ENCODE measurements at regions of chr12 and their contacts with region 1.

Region 1: GRCh38 chr12:122265931-122266771 is at the start of gene VPS33A:
- DNase-seq: peak; percentile 82 to 97 (median 92)
- ATAC-seq: peak; percentile 72
- H3K4me3 ChIP-seq: peak within 1 kb of the TSS; percentile 89 to 95
- H3K4me3 Mint-ChIP-seq: peak within 1 kb of the TSS; percentile 97
- H3K27ac ChIP-seq: peak within 1 kb of the TSS; percentile 95 to 96
- H3K27ac Mint-ChIP-seq: peak within 1 kb of the TSS; percentile 100
- H3K4me1 ChIP-seq: peaks cover 9% of the 10 kb centered on the region
- H3K4me1 Mint-ChIP-seq: peaks cover 36% of the 10 kb centered on the region
- H3K27me3 ChIP-seq: no peaks in the 10 kb centered on the region
- H3K27me3 Mint-ChIP-seq: no peaks in the 10 kb centered on the region
- CTCF ChIP-seq: no peak
- total RNA-seq, gene VPS33A: 11.6 to 13.1 TPM

Region 2: GRCh38 chr12:121399391-121400331 is 866.5 kb before region 1 on chr12 and contains the start of gene RNF34:
- CTCF ChIA-PET with region 1: no interaction called
- POLR2A ChIA-PET with region 1: no interaction called
- intact Hi-C with region 1: loop called in 1 of 2 experiments (anchors 5 kb)
- DNase-seq: peak; percentile 95 to 99 (median 97)
- ATAC-seq: peak; percentile 87
- H3K4me3 ChIP-seq: peak within 1 kb of the TSS; percentile 78 to 89
- H3K4me3 Mint-ChIP-seq: peak within 1 kb of the TSS; percentile 86
- H3K27ac ChIP-seq: peak within 1 kb of the TSS; percentile 78 to 90
- H3K27ac Mint-ChIP-seq: peak within 1 kb of the TSS; percentile 97
- H3K4me1 ChIP-seq: peaks cover 28% of the 10 kb centered on the region
- H3K4me1 Mint-ChIP-seq: peaks cover 33% of the 10 kb centered on the region
- H3K27me3 ChIP-seq: no peaks in the 10 kb centered on the region
- H3K27me3 Mint-ChIP-seq: no peaks in the 10 kb centered on the region
- CTCF ChIP-seq: no peak
- total RNA-seq, gene RNF34: 46.8 to 51.3 TPM

Region 3: DNA sequence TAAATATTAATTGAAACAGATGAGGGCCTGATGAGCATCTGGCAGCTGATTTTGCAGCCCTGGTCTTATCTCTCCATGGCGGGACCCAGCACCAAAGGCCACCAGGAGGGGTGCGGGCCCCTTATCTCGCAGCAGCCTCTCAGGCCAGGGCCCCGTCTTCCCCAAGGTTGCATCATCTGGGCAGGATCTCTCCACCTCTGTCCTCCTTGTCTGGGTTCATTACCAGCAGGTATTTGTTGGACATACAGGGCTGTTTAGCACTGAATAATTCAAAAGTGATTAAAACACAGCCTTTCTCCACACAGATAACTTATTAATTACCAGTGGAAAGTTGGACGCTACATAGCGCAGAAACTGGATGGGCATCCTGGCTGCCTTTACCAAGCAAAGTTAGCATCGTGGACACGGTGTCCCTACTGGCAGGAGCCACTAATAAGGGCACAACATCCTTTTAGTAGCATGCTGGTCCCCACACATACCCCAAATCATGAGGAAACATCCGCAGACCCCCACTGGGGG is 527.8 kb before region 1 on chr12:
- CTCF ChIA-PET with region 1: no interaction called
- POLR2A ChIA-PET with region 1: no interaction called
- intact Hi-C with region 1: no loop called
- DNase-seq: no peak
- ATAC-seq: no peak
- H3K4me3 ChIP-seq: no peak overlapping the region
- H3K4me3 Mint-ChIP-seq: no peak overlapping the region
- H3K27ac ChIP-seq: no peak overlapping the region
- H3K27ac Mint-ChIP-seq: no peak overlapping the region
- H3K4me1 ChIP-seq: no peaks in the 10 kb centered on the region
- H3K4me1 Mint-ChIP-seq: no peaks in the 10 kb centered on the region
- H3K27me3 ChIP-seq: no peaks in the 10 kb centered on the region
- H3K27me3 Mint-ChIP-seq: no peaks in the 10 kb centered on the region
- CTCF ChIP-seq: no peak

Region 4: DNA sequence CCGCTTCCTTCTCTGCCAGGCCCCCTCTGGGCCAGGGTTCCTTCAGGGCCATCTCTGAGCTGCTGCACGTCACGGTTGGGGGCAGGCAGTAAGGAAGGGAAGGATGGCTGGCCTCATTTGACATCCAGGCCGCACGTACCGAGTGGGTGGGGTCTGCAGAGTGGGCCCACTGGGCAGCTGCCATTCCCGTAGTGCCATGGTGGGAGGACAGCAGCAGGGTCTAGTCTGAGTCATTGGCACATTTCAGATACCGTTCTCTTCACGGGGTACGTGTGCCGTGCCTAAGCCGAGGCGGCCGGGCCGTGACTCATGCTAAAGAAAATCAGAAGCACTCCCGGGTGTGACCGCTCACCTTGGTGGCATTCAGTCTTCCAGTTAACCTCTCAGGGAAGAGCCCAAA is 136.0 kb before region 1 on chr12:
- CTCF ChIA-PET with region 1: no interaction called
- POLR2A ChIA-PET with region 1: no interaction called
- intact Hi-C with region 1: loop called (anchors 2 to 10 kb)
- DNase-seq: no peak
- ATAC-seq: no peak
- H3K4me3 ChIP-seq: no peak overlapping the region
- H3K4me3 Mint-ChIP-seq: no peak overlapping the region
- H3K27ac ChIP-seq: no peak overlapping the region
- H3K27ac Mint-ChIP-seq: no peak overlapping the region
- H3K4me1 ChIP-seq: peaks cover 11% of the 10 kb centered on the region
- H3K4me1 Mint-ChIP-seq: peaks cover 14% of the 10 kb centered on the region
- H3K27me3 ChIP-seq: no peaks in the 10 kb centered on the region
- H3K27me3 Mint-ChIP-seq: no peaks in the 10 kb centered on the region
- CTCF ChIP-seq: no peak

Region 5: DNA sequence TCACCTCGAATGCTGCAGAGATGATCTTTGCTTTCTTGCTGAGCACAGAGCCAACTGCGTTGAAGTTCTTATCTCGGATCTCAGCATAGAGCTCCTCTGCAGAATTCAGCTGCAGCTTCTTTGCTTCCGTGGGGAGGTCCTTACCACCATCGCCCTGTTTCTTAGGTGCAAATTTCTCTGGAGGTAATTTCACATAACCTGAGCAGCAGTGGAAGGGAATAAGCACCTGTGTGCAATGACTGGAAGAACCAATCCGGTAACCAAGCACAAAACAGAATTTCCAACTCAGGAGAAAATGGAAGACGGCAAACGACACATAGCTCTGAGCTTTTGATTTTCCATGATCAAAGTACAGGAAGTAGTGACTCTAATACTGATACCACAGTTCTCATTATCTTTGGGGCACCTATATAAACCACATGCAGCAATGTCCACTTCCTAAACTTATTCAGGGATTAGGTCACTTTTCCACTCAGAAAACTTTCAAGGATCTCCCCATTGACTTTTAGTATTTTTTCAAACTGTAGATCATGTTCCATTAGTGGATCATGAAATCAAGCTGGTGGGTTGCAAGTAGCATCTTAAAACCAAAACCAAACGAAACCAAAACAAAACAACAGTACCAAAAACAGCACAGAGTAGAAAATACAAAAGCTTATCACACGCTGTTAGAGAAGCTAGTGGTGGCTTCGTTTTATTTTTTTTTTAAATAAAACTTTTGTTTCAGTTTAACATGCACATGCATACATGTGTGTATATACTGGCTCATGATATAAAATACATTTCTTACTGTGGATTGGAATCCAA is 21.4 kb before region 1 on chr12:
- CTCF ChIA-PET with region 1: interaction called, 3 read pairs
- POLR2A ChIA-PET with region 1: interaction called, 7 read pairs
- intact Hi-C with region 1: loop called in 1 of 2 experiments (anchors 2 kb)
- DNase-seq: peak in 5 of 9 experiments; percentile 6 to 67 (median 43)
- ATAC-seq: peak; percentile 74
- H3K4me3 ChIP-seq: peak overlapping the region; percentile 26 to 44
- H3K4me3 Mint-ChIP-seq: peak overlapping the region; percentile 74
- H3K27ac ChIP-seq: peak overlapping the region; percentile 34 to 67
- H3K27ac Mint-ChIP-seq: peak overlapping the region; percentile 91
- H3K4me1 ChIP-seq: peaks cover 19% of the 10 kb centered on the region
- H3K4me1 Mint-ChIP-seq: peaks cover 26% of the 10 kb centered on the region
- H3K27me3 ChIP-seq: no peaks in the 10 kb centered on the region
- H3K27me3 Mint-ChIP-seq: no peaks in the 10 kb centered on the region
- CTCF ChIP-seq: no peak

Region 6: GRCh38 chr12:123034865-123035264 is 768.7 kb after region 1 on chr12:
- CTCF ChIA-PET with region 1: no interaction called
- POLR2A ChIA-PET with region 1: no interaction called
- intact Hi-C with region 1: no loop called
- DNase-seq: peak in 1 of 9 experiments; percentile 30
- ATAC-seq: peak; percentile 81
- H3K4me3 ChIP-seq: no peak overlapping the region
- H3K4me3 Mint-ChIP-seq: peak overlapping the region; percentile 1
- H3K27ac ChIP-seq: no peak overlapping the region
- H3K27ac Mint-ChIP-seq: peak overlapping the region; percentile 24
- H3K4me1 ChIP-seq: peaks cover 20% of the 10 kb centered on the region
- H3K4me1 Mint-ChIP-seq: peaks cover 22% of the 10 kb centered on the region
- H3K27me3 ChIP-seq: no peaks in the 10 kb centered on the region
- H3K27me3 Mint-ChIP-seq: no peaks in the 10 kb centered on the region
- CTCF ChIP-seq: no peak